ENCODE measurements at regions of chr14 and their contacts with region 1.

Region 1: GRCh38 chr14:77457522-77458290 is at the starts of genes AHSA1 and VIPAS39:
- DNase-seq: peak; percentile 91 to 99
- ATAC-seq: peak; percentile 97 to 98
- H3K4me3 ChIP-seq: peak within 1 kb of the TSS; percentile 91
- H3K27ac ChIP-seq: peak within 1 kb of the TSS; percentile 89 to 95
- H3K4me1 ChIP-seq: peaks cover 15% of the 10 kb centered on the region
- CTCF ChIP-seq: no peak
- EP300 ChIP-seq: no peak
- POLR2A ChIP-seq: peak; percentile 92
- RAD21 ChIP-seq: no peak
- polyA plus RNA-seq, gene AHSA1: 289 and 299 TPM in 2 replicates
- polyA plus RNA-seq, gene VIPAS39: 35.8 and 38.0 TPM in 2 replicates

Region 2: DNA sequence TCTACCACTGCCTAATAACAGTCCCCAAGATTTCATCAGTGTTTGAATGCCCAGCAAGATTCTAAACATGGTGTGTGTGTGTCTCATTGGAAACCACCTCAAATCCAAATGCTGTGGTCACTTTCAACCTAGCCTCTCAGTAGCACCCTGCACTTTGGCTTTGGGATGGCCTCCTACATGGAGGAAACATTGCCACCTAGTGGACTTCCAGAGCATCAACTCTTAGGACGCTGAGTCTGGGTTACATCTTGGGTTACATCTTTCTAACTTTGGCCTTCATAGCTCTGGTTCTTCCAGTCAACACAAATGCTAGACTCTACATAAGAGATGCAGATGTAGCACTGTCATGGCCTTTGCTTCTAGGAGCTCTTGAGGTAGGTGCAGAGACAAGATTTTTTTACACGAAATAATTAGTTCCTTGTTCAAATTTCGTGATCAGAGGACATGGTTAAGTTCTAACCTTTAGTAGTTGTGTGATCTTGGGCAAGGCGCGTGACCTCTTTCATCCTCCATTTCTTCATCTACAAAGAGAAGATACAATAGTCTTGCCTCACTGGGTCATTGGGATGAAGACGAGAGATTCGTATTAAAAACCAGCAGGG is 809.9 kb before region 1 on chr14:
- CTCF ChIA-PET with region 1: no interaction called
- POLR2A ChIA-PET with region 1: no interaction called
- DNase-seq: peak; percentile 71
- ATAC-seq: peak; percentile 71 to 89; a peak in 4 of 6 replicates
- H3K4me3 ChIP-seq: no peak overlapping the region
- H3K27ac ChIP-seq: no peak overlapping the region
- H3K4me1 ChIP-seq: no peaks in the 10 kb centered on the region
- CTCF ChIP-seq: peak; percentile 73
- EP300 ChIP-seq: no peak
- POLR2A ChIP-seq: no peak
- RAD21 ChIP-seq: peak; percentile 59 to 73

Region 3: GRCh38 chr14:77469539-77469938 is 11.8 kb after region 1 on chr14:
- CTCF ChIA-PET with region 1: interaction called, 20 read pairs
- POLR2A ChIA-PET with region 1: interaction called, 3 read pairs
- DNase-seq: no peak
- ATAC-seq: no peak
- H3K4me3 ChIP-seq: no peak overlapping the region
- H3K27ac ChIP-seq: no peak overlapping the region
- H3K4me1 ChIP-seq: no peaks in the 10 kb centered on the region
- CTCF ChIP-seq: no peak
- EP300 ChIP-seq: no peak
- POLR2A ChIP-seq: no peak
- RAD21 ChIP-seq: no peak

Region 4: DNA sequence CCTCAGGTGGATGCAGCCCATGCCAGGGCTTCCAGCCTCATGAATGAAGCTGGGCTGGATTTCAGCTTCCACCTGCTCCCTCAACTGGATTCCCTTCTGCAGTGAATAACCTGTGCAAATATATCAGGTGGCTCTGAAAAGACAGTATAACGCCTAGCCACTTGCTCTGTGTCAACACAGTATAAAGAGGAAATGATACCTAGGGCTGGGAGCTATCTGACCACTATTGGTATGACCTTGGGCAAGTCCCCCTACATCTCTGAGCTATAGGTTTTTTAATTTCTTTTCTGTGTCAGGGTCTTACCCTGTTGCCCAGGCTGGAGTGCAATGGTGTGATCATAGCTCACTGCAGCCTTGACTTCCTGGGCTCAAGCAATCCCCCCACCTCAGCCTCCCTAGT is 21.1 kb after region 1 on chr14:
- CTCF ChIA-PET with region 1: interaction called, 15 read pairs
- POLR2A ChIA-PET with region 1: no interaction called
- DNase-seq: no peak
- ATAC-seq: no peak
- H3K4me3 ChIP-seq: no peak overlapping the region
- H3K27ac ChIP-seq: no peak overlapping the region
- H3K4me1 ChIP-seq: no peaks in the 10 kb centered on the region
- CTCF ChIP-seq: no peak
- EP300 ChIP-seq: no peak
- POLR2A ChIP-seq: no peak
- RAD21 ChIP-seq: no peak

Region 5: GRCh38 chr14:77498120-77498979 is 40.6 kb after region 1 on chr14 and contains the start of gene ISM2:
- CTCF ChIA-PET with region 1: interaction called, 10 read pairs
- POLR2A ChIA-PET with region 1: no interaction called
- DNase-seq: peak; percentile 32 to 43
- ATAC-seq: peak; percentile 88
- H3K4me3 ChIP-seq: peak within 1 kb of the TSS; percentile 70
- H3K27ac ChIP-seq: peak within 1 kb of the TSS; percentile 59 to 75; a peak in 5 of 6 replicates
- H3K4me1 ChIP-seq: peaks cover 6% of the 10 kb centered on the region; the same call in 1 of the 3 replicates
- CTCF ChIP-seq: no peak
- EP300 ChIP-seq: no peak
- POLR2A ChIP-seq: no peak
- RAD21 ChIP-seq: no peak
- polyA plus RNA-seq, gene ISM2: 0.10 and 0.11 TPM in 2 replicates

Region 6: GRCh38 chr14:77554207-77554606 is 96.5 kb after region 1 on chr14:
- CTCF ChIA-PET with region 1: interaction called, 34 read pairs
- POLR2A ChIA-PET with region 1: no interaction called
- DNase-seq: no peak
- ATAC-seq: no peak
- H3K4me3 ChIP-seq: no peak overlapping the region
- H3K27ac ChIP-seq: no peak overlapping the region
- H3K4me1 ChIP-seq: no peaks in the 10 kb centered on the region
- CTCF ChIP-seq: no peak
- EP300 ChIP-seq: no peak
- POLR2A ChIP-seq: no peak
- RAD21 ChIP-seq: no peak

Measured in A549 (cell line).